HEK293T (cell line): ENCODE measurements at regions of chr16 and their contacts with region 1.

Region 1: DNA sequence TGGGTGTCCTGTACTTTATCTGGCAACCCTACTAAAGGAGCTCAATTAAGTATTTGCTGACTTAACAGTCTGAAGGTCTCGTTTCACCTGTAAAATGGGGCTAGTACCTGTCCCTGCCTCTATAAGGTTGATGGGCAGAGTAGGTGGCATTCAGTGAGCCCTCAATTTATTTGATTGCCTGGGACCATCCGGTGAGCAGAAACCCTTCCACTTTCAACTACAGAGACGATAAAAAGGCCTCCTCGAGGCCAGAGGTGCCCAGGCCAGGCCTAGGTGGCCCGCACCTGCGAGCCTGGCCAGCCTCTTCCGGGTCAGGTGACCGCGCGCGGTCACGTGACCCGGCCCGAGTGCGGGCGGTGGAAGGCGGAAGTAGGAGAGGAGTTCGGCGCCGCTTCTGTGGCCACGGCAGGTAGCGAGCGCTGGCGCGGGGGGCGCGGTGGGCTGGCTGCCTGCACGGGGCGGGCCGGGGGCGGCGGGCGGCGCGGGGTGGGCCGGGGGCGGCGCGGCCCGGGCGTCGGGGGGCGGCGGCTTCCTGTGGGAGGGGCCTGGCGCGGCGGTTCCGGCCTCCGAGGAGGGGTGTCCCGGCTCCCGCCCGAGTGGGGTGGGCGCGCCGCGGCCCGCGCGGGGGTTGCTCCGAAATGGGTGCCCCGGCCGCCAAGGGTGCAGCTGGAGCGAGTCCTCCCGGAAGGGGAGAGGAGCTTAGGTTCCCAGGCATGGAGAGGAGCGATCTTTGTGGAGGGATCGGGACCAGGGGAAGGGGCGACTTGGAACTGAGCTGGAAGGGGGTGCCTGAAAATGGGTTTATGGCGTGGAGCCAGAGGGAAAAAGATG is at the start of gene WWP2:
- DNase-seq: peak; percentile 85

Region 2: GRCh38 chr16:69741919-69742904 is 20.0 kb before region 1 on chr16:
- CTCF ChIA-PET with region 1: no interaction called
- POLR2A ChIA-PET with region 1: no interaction called
- DNase-seq: no peak

Region 3: DNA sequence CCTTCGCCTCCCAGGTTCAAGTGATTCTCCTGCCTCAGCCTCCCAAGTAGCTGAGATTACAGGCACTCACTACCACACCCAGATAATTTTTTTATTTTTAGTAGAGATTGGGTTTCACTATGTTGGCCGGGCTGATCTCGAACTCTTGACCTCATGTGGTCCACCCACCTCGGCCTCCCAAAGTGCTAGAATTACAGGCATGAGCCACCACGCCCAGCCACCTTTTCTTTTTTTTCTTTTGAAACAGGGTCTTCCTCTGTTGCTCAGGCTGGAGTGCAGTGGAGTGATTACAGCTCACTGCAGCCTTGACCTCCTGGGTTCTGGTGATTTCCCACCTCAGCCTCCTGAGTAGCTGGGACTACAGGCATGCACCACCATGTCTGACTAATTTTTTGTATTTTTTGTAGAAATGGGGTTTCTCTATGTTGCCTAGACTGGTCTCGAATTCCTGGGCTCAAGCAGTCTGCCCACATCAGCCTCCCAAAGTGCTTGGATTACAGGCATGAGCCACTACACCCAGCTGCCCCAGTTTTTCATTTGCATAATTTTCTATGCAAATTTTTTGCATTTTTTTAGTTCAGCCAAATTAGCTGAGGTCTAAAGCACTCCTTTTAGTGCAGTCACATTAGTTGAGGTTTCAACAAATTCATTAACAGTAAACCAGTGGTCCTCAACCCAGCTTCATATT is 11.2 kb after region 1 on chr16:
- CTCF ChIA-PET with region 1: no interaction called
- POLR2A ChIA-PET with region 1: interaction called, 12 read pairs
- DNase-seq: no peak